Activated CD4-positive, alpha-beta T cell treated with anti-CD3 and anti-CD28 coated beads, Interleukin-2, amount 10 ng/mL, durations not matched to agents 24 days and 14 days (primary cell): ENCODE measurements at regions of chr1 and their contacts with region 1.

Region 1: GRCh38 chr1:168408536-168409242 is 128.0 kb downstream of the TBX19 start:
- DNase-seq: peak; percentile 90
- H3K4me3 Mint-ChIP-seq: peak overlapping the region; percentile 53
- H3K27ac Mint-ChIP-seq: peak overlapping the region; percentile 86
- H3K4me1 Mint-ChIP-seq: peaks cover 39% of the 10 kb centered on the region
- H3K27me3 Mint-ChIP-seq: no peaks in the 10 kb centered on the region

Region 2: GRCh38 chr1:168360151-168361021 is 48.3 kb before region 1 on chr1:
- intact Hi-C with region 1: loop called (anchors 1 kb)
- DNase-seq: peak; percentile 75
- H3K4me3 Mint-ChIP-seq: peak overlapping the region; percentile 3
- H3K27ac Mint-ChIP-seq: peak overlapping the region; percentile 46
- H3K4me1 Mint-ChIP-seq: peaks cover 29% of the 10 kb centered on the region
- H3K27me3 Mint-ChIP-seq: peaks cover 12% of the 10 kb centered on the region

Region 3: DNA sequence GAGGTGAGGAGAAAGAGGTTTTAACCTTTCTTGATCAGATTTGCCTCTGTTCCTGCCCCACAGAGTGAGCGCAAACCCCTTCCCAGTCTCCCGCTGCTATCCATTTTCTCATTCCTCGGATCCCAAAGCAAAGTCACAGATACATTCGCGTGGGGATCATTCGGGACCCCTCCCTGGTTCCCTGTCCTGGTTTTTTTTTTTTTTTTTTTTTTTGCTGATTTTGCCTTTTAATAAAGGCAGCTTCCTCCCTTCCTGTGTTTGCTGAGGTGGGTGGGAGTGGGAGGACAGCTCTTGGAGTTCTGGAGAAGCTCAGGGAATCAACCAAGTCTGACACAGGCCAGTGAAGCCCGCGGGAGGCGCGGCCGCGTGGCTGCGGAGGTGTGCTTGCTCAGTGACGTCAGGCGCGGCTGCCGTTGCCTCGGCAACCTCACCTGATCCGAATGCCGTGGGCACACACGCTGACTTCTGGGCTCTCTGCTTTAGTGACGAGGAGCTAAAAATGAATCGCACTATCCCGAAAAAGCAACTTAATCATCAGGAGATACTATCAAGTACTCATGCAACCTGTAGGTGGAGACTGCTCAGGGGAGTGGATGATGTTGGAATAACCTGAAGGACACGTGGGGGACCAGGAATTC is 21.6 kb before region 1 on chr1:
- intact Hi-C with region 1: loop called (anchors 1 kb)
- DNase-seq: peak; percentile 90
- H3K4me3 Mint-ChIP-seq: peak overlapping the region; percentile 70
- H3K27ac Mint-ChIP-seq: peak overlapping the region; percentile 77
- H3K4me1 Mint-ChIP-seq: peaks cover 12% of the 10 kb centered on the region
- H3K27me3 Mint-ChIP-seq: peaks cover 32% of the 10 kb centered on the region

Region 4: GRCh38 chr1:168396940-168397698 is 11.6 kb before region 1 on chr1:
- intact Hi-C with region 1: loop called (anchors 1 kb)
- DNase-seq: no peak
- H3K4me3 Mint-ChIP-seq: no peak overlapping the region
- H3K27ac Mint-ChIP-seq: no peak overlapping the region
- H3K4me1 Mint-ChIP-seq: peaks cover 25% of the 10 kb centered on the region
- H3K27me3 Mint-ChIP-seq: peaks cover 15% of the 10 kb centered on the region

Region 5: GRCh38 chr1:168421399-168422004 is 12.8 kb after region 1 on chr1:
- intact Hi-C with region 1: loop called (anchors 1 kb)
- DNase-seq: peak; percentile 76
- H3K4me3 Mint-ChIP-seq: peak overlapping the region; percentile 44
- H3K27ac Mint-ChIP-seq: peak overlapping the region; percentile 52
- H3K4me1 Mint-ChIP-seq: peaks cover 15% of the 10 kb centered on the region
- H3K27me3 Mint-ChIP-seq: peaks cover 3% of the 10 kb centered on the region

Region 6: DNA sequence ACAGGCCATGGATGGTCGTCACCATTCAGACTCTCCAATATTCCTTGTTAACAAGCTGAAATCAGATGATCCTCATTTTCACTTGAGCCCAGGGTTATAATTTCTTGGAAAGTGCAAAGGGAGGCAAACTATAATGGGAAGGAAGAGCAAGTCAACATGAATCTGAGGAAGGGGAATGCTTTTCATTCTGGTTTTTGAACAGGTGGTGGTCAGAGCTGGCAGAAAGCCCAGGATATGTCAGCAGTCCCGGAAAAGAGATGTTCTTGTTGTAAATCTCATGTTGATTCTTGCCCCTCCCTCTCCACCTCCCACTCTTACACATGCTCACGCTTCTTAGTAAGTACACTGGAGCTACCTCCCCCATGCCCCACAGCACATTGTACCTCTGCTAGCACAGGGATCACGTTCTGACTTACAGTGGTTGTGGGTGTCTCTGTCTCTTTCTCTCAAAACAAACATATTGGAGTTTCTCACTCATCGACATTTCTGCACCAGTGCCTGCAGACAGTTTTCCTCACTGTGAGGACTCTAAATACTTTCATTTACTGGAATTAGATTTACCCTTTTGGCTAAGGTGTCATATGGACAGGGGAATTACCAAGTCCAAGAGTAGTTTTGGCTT is 57.5 kb after region 1 on chr1:
- intact Hi-C with region 1: loop called (anchors 1 kb)
- DNase-seq: peak; percentile 75
- H3K4me3 Mint-ChIP-seq: peak overlapping the region; percentile 32
- H3K27ac Mint-ChIP-seq: peak overlapping the region; percentile 71
- H3K4me1 Mint-ChIP-seq: peaks cover 58% of the 10 kb centered on the region
- H3K27me3 Mint-ChIP-seq: no peaks in the 10 kb centered on the region

Region 7: DNA sequence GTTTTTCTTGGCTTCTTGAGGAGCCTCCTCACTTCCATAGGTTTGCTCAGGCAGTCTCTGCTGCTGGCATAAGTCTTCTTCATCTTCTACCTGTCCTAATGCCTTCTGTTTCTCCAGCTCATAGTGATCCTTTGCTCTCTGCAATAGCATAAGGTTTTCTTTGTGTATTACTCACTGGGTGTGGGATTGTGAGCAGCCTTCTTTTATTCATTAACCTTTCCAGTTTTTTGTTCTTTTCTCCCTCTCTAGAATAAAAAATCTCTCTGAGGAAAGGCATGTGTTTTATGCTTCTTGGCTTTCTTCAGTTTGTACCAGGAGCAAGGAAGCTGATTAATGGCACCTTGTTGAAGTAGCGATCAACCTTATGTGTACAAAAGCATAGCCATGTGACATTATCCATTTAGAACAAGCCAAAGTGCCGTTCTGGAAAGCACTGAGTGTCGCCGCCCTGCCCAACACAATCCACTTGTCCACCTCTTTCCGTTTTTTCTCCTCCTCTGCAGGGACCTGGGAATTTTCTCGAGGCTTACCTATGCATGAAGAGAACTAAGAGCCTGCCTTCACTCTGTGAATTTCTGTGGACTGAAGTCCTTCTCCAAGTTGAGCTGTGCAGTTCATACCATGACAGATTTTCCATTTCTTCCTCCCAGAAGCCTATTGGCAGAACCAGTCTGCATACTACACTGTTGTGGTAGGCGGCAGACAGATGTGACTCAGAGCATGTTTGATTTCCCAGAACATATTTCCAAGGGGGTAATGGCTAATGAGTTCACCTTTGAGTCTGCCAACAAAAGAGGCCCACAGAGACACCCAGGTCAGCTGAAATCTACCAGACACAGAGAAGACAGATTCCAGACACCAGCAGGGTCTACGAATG is 281.3 kb after region 1 on chr1:
- intact Hi-C with region 1: no loop called
- DNase-seq: no peak
- H3K4me3 Mint-ChIP-seq: no peak overlapping the region
- H3K27ac Mint-ChIP-seq: no peak overlapping the region
- H3K4me1 Mint-ChIP-seq: no peaks in the 10 kb centered on the region
- H3K27me3 Mint-ChIP-seq: peaks cover 8% of the 10 kb centered on the region